Right ventricle myocardium inferior (tissue), 1 donor: ENCODE measurements at regions of chr4 and their contacts with region 1.

Region 1: GRCh38 chr4:119314356-119314755 is 7.6 kb downstream of the FABP2 start:
- DNase-seq: no peak
- ATAC-seq: peak; percentile 69

Region 2: DNA sequence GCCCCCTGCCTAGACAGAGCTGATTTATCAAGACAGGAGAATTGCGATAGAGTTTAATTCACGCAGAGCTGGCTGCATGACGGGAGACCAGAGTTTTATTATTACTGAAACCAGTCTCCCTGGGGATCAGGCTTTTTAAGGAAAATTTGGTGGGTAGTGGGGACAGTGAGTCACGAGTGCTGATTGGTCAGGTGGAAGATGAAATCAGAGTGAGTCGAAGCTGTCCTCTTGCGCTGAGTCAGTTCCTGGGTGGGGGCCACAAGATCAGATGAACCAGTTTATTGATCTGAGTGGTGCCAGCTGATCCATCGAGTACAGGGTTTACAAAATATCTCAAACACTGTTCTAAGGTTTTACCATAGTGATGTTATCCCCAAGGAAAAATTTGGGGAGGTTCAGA is 142.1 kb before region 1 on chr4:
- intact Hi-C with region 1: no loop called
- DNase-seq: no peak
- ATAC-seq: no peak

Region 3: DNA sequence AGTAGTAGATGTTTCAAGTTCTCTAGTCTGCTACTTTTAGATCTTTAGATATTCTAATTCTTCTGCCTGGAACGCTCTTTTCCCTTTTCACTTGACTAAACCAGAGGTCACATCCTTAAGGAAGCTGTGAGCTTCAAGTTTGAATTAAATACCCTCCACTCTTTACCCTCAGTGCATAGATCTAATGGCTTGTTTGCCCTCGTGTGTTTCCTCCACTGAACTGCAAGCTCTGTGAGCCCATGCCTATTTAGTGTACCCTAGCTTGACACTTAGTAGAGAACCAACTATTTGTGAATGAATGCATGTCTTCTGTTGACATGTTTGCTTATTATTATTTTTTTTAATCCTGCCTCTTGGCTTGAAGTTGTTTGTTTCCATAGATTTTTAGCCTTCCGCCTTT is 176.0 kb after region 1 on chr4:
- intact Hi-C with region 1: loop called (anchors 1 kb)
- DNase-seq: no peak
- ATAC-seq: no peak

Region 4: GRCh38 chr4:119628308-119629141 is 314.2 kb after region 1 on chr4 and contains the start of gene PDE5A:
- intact Hi-C with region 1: loop called (anchors 10 kb)
- DNase-seq: peak; percentile 88
- ATAC-seq: peak; percentile 87
- total RNA-seq, gene PDE5A: 7.4 TPM

Region 5: DNA sequence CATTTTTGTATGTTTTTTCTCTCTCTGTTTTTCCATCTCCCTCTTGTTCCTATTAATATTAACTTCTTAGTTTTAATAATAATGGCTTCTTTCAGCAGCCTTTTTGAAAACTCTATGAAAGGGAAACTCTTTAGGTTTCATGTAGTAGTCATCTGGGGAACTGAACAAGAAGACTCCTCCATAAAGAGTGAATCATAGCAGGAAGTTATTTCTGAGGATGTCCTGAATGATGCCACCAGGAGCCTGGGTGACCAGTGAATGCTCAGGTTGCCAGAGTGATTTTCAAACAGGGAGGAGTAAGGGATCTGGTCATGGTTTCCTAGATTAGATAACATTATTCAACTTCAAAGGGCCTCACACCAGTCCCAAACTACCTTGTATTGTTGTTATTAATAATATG is 527.0 kb after region 1 on chr4:
- intact Hi-C with region 1: no loop called
- DNase-seq: no peak
- ATAC-seq: no peak